Mammary epithelial cell (primary cell): ENCODE measurements at regions of chr9 and their contacts with region 1.

Region 1: GRCh38 chr9:129884220-129885017 is 49.2 kb downstream of the USP20 start:
- DNase-seq: peak; percentile 65
- H3K4me3 ChIP-seq: peak overlapping the region in 2 of 3 experiments; percentile 15 to 45
- H3K27ac ChIP-seq: no peak overlapping the region
- H3K4me1 ChIP-seq: peaks cover 22% of the 10 kb centered on the region
- H3K27me3 ChIP-seq: no peaks in the 10 kb centered on the region
- CTCF ChIP-seq: no peak

Region 2: GRCh38 chr9:129785866-129786265 is 98.6 kb before region 1 on chr9:
- CTCF ChIA-PET with region 1: no interaction called
- dilution Hi-C with region 1: no loop called
- in situ Hi-C with region 1: no loop called
- intact Hi-C with region 1: no loop called
- DNase-seq: no peak
- H3K4me3 ChIP-seq: no peak overlapping the region
- H3K27ac ChIP-seq: no peak overlapping the region
- H3K4me1 ChIP-seq: no peaks in the 10 kb centered on the region
- H3K27me3 ChIP-seq: no peaks in the 10 kb centered on the region
- CTCF ChIP-seq: no peak

Region 3: GRCh38 chr9:129910628-129911567 is 26.5 kb after region 1 on chr9:
- CTCF ChIA-PET with region 1: no interaction called
- dilution Hi-C with region 1: no loop called
- in situ Hi-C with region 1: no loop called
- intact Hi-C with region 1: loop called (anchors 1 kb)
- DNase-seq: peak; percentile 99
- H3K4me3 ChIP-seq: no peak overlapping the region
- H3K27ac ChIP-seq: peak overlapping the region; percentile 37
- H3K4me1 ChIP-seq: peaks cover 12% of the 10 kb centered on the region
- H3K27me3 ChIP-seq: no peaks in the 10 kb centered on the region
- CTCF ChIP-seq: no peak

Region 4: DNA sequence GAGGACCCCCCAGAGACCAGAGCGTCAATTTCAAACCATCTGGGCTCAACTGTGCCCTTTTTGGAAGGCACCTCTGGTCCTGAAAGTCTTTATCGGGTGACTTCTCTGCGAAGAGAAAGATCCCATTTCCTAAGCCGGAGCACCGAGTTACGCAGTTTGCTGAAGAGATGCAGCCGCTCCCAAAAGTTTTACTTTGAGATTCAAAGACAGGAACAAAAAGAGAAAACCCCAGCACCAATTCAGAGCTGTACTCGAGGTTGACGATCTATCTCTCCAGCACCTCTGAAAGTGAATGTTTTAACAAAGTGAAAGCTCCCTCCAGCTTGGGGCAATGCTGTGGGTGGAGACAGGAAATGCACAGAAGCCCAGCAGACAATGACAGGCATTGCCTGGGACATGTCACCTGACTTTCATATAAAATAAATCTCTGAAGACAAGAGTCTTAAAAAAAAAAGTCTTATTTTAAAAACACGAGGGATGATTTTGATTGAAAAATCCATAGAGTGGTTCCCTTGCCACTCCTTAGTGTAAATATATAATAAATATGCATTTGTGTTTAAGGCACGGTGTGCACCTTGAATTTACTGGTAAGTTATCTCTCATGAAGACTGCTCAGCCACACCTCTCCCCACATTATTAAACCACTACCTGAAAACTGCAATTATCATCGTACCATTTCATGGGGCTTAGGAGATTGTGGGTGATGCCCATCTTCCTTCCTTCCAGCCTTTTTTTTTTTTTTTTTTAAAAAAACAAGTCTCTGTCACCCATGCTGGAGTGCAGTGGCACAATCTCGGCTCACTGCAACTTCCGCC is 78.7 kb after region 1 on chr9:
- CTCF ChIA-PET with region 1: no interaction called
- dilution Hi-C with region 1: no loop called
- in situ Hi-C with region 1: no loop called
- intact Hi-C with region 1: loop called (anchors 5 kb)
- DNase-seq: peak; percentile 57
- H3K4me3 ChIP-seq: peak overlapping the region; percentile 53 to 81 (median 60)
- H3K27ac ChIP-seq: peak overlapping the region; percentile 74
- H3K4me1 ChIP-seq: peaks cover 11% of the 10 kb centered on the region
- H3K27me3 ChIP-seq: no peaks in the 10 kb centered on the region
- CTCF ChIP-seq: no peak

Region 5: GRCh38 chr9:130042833-130043653 is 158.6 kb after region 1 on chr9 and contains the start of gene FNBP1:
- CTCF ChIA-PET with region 1: no interaction called
- dilution Hi-C with region 1: no loop called
- in situ Hi-C with region 1: loop called in 1 of 2 experiments (anchors 10 kb)
- intact Hi-C with region 1: loop called (anchors 1 kb)
- DNase-seq: peak; percentile 69
- H3K4me3 ChIP-seq: peak within 1 kb of the TSS; percentile 79 to 88 (median 86)
- H3K27ac ChIP-seq: peak within 1 kb of the TSS; percentile 34
- H3K4me1 ChIP-seq: peaks cover 4% of the 10 kb centered on the region
- H3K27me3 ChIP-seq: no peaks in the 10 kb centered on the region
- CTCF ChIP-seq: peak in 1 of 2 donors; percentile 8
- total RNA-seq, gene FNBP1: 11.5 to 21.5 TPM

Region 6: GRCh38 chr9:130088051-130088450 is 203.6 kb after region 1 on chr9:
- CTCF ChIA-PET with region 1: no interaction called
- dilution Hi-C with region 1: no loop called
- in situ Hi-C with region 1: loop called in 1 of 2 experiments (anchors 10 kb)
- intact Hi-C with region 1: no loop called
- DNase-seq: no peak
- H3K4me3 ChIP-seq: no peak overlapping the region
- H3K27ac ChIP-seq: no peak overlapping the region
- H3K4me1 ChIP-seq: no peaks in the 10 kb centered on the region
- H3K27me3 ChIP-seq: no peaks in the 10 kb centered on the region
- CTCF ChIP-seq: no peak

Region 7: DNA sequence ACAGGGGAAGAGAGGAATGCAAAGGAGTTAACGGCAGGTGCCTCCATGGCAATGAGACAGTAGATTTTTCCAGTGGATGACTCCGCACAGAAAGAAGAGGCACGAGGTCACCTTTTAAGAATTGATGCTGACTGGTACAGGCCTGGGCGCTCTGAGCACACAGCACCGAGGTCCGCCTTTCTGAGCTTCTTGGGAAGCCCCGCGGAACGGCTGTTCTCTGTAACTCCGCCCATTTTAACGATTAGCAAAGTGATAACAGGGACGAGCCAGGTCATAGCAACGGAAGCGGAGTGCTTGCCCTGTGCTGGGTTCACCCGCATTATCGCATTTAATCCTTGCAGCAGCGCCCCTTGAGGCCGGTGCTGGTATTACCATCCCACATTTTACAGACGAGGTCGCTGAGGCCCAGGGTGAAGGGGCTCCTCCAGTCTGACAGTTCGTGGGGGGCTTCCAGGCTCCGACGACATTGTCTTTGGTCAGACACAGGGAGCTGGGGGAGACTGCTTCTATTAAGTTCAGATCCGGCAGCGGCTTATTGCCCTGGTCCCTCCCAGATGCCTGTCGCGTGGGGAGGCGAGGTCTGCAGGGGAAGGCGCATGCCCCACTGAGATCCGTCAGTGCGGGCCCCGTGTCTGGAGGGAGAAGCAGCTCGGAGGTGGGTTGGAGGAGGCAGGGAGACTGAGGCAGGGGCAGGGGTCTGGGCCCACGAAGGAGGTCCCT is 358.8 kb after region 1 on chr9:
- CTCF ChIA-PET with region 1: no interaction called
- dilution Hi-C with region 1: no loop called
- in situ Hi-C with region 1: loop called (anchors 25 kb)
- intact Hi-C with region 1: loop called (anchors 2 kb)
- DNase-seq: no peak
- H3K4me3 ChIP-seq: no peak overlapping the region
- H3K27ac ChIP-seq: no peak overlapping the region
- H3K4me1 ChIP-seq: no peaks in the 10 kb centered on the region
- H3K27me3 ChIP-seq: no peaks in the 10 kb centered on the region
- CTCF ChIP-seq: peak; percentile 87 to 90

Region 8: DNA sequence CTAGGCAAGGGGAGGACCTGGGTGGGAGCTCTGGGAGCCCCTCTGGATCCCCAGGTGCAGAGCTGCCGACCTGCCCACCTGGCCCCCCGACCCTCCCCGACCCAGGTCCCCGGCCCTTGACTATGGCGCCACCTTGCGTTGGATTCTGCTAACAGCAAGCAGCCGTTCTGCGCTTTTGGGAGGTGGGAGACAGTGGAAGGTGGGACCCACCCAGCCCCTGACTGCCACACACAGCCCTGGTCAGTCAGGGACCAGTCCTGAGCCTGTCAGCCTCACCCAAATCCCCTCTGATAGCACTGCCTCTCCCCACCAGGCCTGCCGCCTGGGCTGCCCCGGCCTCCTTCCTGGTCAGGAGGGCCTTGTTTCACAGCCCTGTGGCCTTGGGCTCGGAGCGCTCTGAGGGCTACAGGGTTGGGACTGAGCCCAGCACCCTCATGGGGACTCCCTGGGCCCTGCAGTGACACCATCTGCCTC is 459.1 kb after region 1 on chr9:
- CTCF ChIA-PET with region 1: no interaction called
- dilution Hi-C with region 1: no loop called
- in situ Hi-C with region 1: no loop called
- intact Hi-C with region 1: loop called (anchors 2 kb)
- DNase-seq: no peak
- H3K4me3 ChIP-seq: no peak overlapping the region
- H3K27ac ChIP-seq: no peak overlapping the region
- H3K4me1 ChIP-seq: no peaks in the 10 kb centered on the region
- H3K27me3 ChIP-seq: no peaks in the 10 kb centered on the region
- CTCF ChIP-seq: peak; percentile 44 to 67